ENCODE measurements at regions of chr1 and their contacts with region 1.

Region 1: GRCh38 chr1:224266105-224266935 is 63.7 kb downstream of the NVL start:
- DNase-seq: no peak
- ATAC-seq: no peak
- H3K4me3 ChIP-seq: no peak overlapping the region
- H3K27ac ChIP-seq: no peak overlapping the region
- H3K4me1 ChIP-seq: no peaks in the 10 kb centered on the region; the same call in 1 of the 2 replicates
- H3K27me3 ChIP-seq: no peaks in the 10 kb centered on the region
- CTCF ChIP-seq: no peak
- POLR2A ChIP-seq: no peak
- RAD21 ChIP-seq: no peak

Region 2: GRCh38 chr1:224287714-224288113 is 21.4 kb after region 1 on chr1:
- CTCF ChIA-PET with region 1: no interaction called
- POLR2A ChIA-PET with region 1: no interaction called
- dilution Hi-C with region 1: no loop called
- in situ Hi-C with region 1: no loop called
- intact Hi-C with region 1: loop called (anchors 1 kb)
- DNase-seq: no peak
- ATAC-seq: no peak
- H3K4me3 ChIP-seq: no peak overlapping the region
- H3K27ac ChIP-seq: no peak overlapping the region
- H3K4me1 ChIP-seq: no peaks in the 10 kb centered on the region
- H3K27me3 ChIP-seq: no peaks in the 10 kb centered on the region
- CTCF ChIP-seq: no peak
- POLR2A ChIP-seq: no peak
- RAD21 ChIP-seq: no peak

Region 3: GRCh38 chr1:224589006-224589405 is 322.7 kb after region 1 on chr1:
- CTCF ChIA-PET with region 1: no interaction called
- POLR2A ChIA-PET with region 1: no interaction called
- dilution Hi-C with region 1: no loop called
- in situ Hi-C with region 1: no loop called
- intact Hi-C with region 1: no loop called
- DNase-seq: peak; percentile 63
- ATAC-seq: peak; percentile 48; the same call in 1 of the 2 replicates
- H3K4me3 ChIP-seq: no peak overlapping the region
- H3K27ac ChIP-seq: no peak overlapping the region
- H3K4me1 ChIP-seq: peaks cover 6% of the 10 kb centered on the region
- H3K27me3 ChIP-seq: no peaks in the 10 kb centered on the region
- CTCF ChIP-seq: no peak
- POLR2A ChIP-seq: no peak
- RAD21 ChIP-seq: no peak